Astrocyte of the cerebellum (primary cell): ENCODE measurements at regions of chr10 and their contacts with region 1.

Region 1: DNA sequence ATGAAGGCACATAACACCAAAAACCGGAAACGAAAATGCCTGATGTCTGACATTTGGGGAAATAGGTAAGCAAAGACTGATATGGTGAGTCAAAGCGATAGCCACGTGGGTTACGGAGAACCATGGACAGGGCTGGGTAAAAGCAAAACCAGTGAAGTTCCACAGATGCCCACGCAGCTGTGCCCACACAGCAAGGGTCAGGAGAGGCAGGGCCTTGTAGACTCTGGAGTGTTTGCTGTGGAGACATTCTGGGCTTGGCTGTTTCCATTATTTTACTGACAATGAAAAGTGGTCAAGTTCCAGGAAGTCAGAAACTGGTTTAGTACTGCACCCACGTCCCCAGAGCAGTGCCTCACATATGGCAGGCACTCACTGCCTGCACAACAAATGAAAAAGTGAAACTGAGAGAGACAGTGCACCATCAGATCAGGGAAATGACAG is 148.7 kb downstream of the ZMYND11 start:
- DNase-seq: no peak
- H3K4me3 ChIP-seq: no peak overlapping the region
- CTCF ChIP-seq: no peak

Region 2: GRCh38 chr10:338518-339311 is 54.8 kb after region 1 on chr10:
- in situ Hi-C with region 1: loop called (anchors 5 kb)
- DNase-seq: no peak
- H3K4me3 ChIP-seq: no peak overlapping the region
- CTCF ChIP-seq: no peak

Region 3: GRCh38 chr10:351770-352334 is 67.9 kb after region 1 on chr10:
- in situ Hi-C with region 1: no loop called
- DNase-seq: no peak
- H3K4me3 ChIP-seq: no peak overlapping the region
- CTCF ChIP-seq: no peak

Region 4: GRCh38 chr10:1274111-1274661 is 990.2 kb after region 1 on chr10:
- in situ Hi-C with region 1: no loop called
- DNase-seq: no peak
- H3K4me3 ChIP-seq: no peak overlapping the region
- CTCF ChIP-seq: no peak